GM18951 (cell line): ENCODE measurements at regions of chr12 and their contacts with region 1.

Region 1: GRCh38 chr12:120332041-120332440 is 4.5 kb upstream of the PLA2G1B start:
- POLR2A ChIP-seq: no peak

Region 2: DNA sequence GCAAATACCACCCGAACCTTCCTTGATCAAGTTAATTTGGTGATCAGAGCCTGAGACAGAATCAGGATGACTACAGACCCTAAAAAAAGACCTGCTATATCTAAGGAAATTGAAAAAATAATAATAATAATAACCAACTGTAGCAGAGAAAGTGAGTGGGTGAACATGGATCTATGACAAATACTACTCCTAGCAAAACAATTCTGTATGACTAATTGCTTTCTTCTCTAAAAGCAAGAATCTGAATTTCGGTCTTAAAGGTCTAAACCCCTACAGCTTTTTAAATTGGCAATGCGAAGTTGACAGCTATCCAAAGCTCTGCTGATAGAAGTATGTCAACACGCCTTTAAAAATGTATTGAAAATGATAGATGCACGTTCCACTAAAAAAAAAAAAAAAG is 561.9 kb before region 1 on chr12:
- in situ Hi-C with region 1: no loop called
- POLR2A ChIP-seq: no peak

Region 3: DNA sequence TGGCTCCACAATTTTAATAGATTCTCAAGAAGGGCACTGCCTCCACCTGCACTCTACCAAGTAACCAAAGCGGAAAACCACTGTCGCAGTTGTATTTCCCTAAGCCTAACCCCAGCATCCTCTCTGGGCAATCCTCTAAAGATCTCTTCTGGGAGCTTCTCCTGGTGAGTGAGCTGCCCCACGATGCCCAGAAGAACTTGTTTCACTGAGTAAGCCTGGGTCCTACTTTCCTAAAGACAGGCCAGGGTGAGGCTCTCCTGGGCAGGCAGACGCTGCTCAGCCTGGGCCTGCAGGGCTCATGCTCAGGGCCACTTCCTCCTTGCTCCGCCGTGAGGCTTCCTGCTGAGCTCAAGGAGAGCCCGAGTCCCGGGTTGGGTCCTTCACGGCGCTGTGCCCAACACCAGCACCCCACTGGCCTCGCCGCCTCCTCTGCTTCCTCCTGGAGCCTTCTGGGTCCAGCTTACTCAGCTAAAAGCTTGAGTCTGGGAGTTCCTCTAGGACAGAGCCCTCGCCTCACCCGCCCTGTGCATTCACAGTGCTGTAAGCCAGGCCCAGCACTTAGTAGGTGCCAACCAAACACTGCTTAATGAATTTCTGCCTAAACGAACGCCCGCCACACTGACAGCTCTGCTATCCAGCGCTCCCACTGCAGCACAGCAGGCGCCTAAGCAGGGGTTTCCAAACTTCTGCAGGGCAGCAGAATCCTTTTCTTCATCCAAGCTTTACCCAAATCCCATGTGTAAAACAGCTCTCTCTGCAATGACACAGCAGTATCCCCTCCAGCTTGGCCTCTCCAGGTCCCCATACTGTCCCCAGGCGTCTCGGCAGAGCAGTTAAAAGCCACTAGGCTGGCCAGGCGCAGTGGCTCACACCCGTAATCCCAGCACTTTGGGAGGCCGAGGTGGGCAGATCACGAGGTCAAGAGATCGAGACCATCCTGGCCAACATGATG is 221.2 kb before region 1 on chr12:
- in situ Hi-C with region 1: no loop called
- POLR2A ChIP-seq: peak; percentile 24

Region 4: GRCh38 chr12:120421701-120422100 is 89.7 kb after region 1 on chr12:
- in situ Hi-C with region 1: loop called (anchors 10 kb)
- POLR2A ChIP-seq: no peak